ENCODE measurements at regions of chr18 and their contacts with region 1.

Region 1: DNA sequence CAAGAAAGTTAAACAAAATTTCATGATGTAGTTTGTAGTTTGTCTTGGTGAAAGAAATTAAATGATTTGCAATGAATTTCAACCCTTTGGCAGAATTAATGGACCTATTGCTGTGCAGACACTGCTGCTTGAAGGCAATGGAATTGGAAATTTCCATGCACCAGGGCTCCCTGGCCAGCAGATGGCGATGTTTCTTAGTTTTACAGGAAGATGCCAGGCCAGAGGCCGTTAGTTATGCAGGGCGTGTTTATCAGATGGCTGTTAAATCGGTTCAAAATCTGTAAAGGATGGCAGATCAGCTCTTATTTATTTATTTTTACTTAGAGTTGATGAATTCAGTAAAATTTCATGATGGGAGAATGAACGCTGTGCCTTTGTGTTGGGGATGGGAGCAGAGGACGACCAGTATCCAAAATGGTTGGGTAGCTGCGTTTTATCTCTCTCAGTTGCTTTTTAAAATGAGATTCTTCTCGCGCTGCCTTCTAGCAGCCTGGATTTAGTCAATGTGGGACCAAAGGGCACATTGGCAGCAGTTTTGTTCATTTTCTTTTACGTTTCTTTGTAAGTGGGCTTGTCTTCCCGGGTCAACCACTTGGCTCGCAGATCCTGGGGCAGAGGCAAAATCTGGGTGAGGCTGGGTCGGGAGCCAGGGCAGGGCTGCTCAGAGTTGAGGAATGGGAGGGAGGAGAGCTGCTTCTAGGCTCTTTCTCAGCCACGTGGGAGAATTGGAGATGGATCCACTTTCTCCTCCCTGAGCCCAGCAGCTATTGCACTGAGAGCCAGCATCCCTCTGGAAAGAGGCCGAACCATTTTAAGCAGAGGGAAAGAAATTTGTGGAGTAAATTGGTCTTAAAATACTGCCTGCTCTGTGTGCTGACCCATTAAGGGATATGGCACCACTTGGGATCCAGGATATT is 344.0 kb downstream of the PIK3C3 start:
- DNase-seq: peak; percentile 69
- ATAC-seq: peak; percentile 74 to 97

Region 2: DNA sequence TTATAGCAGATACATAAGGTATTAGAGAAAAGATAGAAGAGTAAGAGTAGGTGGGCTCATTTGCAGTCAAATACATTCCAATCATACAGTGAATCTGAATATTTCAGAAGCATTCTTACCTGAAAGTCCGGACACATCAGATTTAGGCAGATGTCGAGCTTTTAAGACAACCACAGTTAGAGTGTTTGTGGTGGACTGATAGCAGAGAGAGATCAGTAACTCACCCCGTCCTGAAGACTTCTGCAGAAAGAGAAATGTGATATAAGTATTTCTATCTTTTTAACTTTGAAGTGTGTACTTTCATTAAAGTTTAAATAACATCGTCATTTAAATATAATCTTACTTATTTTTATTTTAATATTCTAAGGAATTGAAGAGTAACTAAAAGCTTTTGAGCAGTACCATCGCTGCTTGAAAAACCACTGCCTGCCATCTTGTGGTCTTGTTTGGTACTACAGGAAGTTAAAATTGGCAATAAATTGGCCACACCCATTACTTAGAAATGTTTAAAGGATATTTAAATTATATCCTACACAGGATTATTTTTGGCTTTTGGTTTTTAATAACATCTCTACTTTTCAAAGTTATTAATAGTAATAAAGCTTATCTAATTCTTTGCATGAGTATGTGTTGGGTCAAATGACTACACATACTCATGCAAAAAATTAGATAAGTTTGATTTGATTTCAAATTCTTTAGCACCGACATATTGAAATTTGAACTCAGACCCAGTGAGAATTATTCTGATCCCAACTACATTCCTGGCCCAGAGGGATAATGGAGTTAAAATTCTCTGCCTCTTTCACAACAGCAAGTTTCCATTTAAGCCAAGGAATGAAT is 972.8 kb after region 1 on chr18:
- intact Hi-C with region 1: loop called in 1 of 2 experiments (anchors 2 kb)
- DNase-seq: no peak
- ATAC-seq: no peak